Activated naive CD4-positive, alpha-beta T cell treated with anti-CD3 and anti-CD28 coated beads for 36 hours (primary cell): ENCODE measurements at regions of chr7 and their contacts with region 1.

Region 1: GRCh38 chr7:131007394-131008330 is 273.7 kb upstream of the KLF14 start:
- DNase-seq: peak; percentile 80
- H3K4me3 Mint-ChIP-seq: peak overlapping the region; percentile 52
- H3K27ac Mint-ChIP-seq: peak overlapping the region; percentile 91
- H3K4me1 Mint-ChIP-seq: peaks cover 86% of the 10 kb centered on the region
- H3K27me3 Mint-ChIP-seq: no peaks in the 10 kb centered on the region

Region 2: GRCh38 chr7:130875265-130875741 is 132.4 kb before region 1 on chr7:
- CTCF ChIA-PET with region 1: no interaction called
- intact Hi-C with region 1: loop called (anchors 1 kb)
- DNase-seq: peak; percentile 67
- H3K4me3 Mint-ChIP-seq: no peak overlapping the region
- H3K27ac Mint-ChIP-seq: peak overlapping the region; percentile 59
- H3K4me1 Mint-ChIP-seq: peaks cover 39% of the 10 kb centered on the region
- H3K27me3 Mint-ChIP-seq: no peaks in the 10 kb centered on the region

Region 3: DNA sequence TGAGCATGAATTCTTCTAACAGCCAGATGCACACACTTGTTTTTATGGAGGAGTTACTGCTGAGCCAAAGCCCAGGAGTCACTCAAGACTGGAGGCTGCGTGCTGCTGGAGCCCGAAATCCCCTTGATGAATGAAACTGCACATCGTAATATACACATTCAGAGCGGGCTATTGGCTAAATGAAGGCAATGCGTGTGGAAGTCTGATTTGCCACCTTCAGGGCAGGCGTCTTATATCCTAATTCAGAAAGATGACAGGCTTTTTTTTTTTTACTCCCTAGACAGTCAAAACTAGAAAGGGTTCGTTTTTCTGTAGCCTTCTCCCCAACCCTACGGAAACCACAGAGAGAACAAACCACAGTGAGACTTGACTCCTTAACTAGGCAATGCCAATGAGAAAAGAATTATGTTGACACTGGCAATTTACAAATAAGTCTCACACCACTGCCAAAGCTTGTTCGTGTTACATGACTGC is 46.5 kb before region 1 on chr7:
- CTCF ChIA-PET with region 1: interaction called, 5 read pairs
- intact Hi-C with region 1: loop called (anchors 1 kb)
- DNase-seq: peak; percentile 92
- H3K4me3 Mint-ChIP-seq: peak overlapping the region; percentile 87
- H3K27ac Mint-ChIP-seq: peak overlapping the region; percentile 99
- H3K4me1 Mint-ChIP-seq: peaks cover 36% of the 10 kb centered on the region
- H3K27me3 Mint-ChIP-seq: no peaks in the 10 kb centered on the region

Region 4: DNA sequence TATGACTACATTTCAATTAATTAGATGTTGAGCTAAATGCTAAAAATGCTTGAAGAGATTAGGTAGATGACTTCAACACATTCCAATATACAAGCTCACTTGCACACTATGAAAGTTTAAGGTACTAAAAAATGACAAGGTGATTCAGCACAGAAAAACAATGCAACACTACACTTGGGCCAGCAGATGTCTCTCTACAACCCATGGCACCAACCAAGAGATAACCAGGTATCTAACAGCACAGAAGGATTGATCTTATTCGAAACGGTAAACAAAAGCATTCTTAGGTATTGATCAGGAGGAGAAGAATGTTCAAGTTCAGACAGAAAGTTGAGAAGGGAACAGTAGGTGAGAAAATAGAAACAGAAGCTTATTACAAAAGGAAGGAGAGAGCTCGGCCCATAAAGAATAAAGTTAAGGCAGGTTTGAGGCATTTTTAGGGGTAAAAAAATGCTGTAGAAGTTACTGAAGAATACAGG is 25.5 kb before region 1 on chr7:
- CTCF ChIA-PET with region 1: interaction called, 61 read pairs
- intact Hi-C with region 1: loop called (anchors 1 kb)
- DNase-seq: peak; percentile 54
- H3K4me3 Mint-ChIP-seq: no peak overlapping the region
- H3K27ac Mint-ChIP-seq: no peak overlapping the region
- H3K4me1 Mint-ChIP-seq: peaks cover 55% of the 10 kb centered on the region
- H3K27me3 Mint-ChIP-seq: no peaks in the 10 kb centered on the region

Region 5: GRCh38 chr7:131021460-131021859 is 13.8 kb after region 1 on chr7:
- CTCF ChIA-PET with region 1: interaction called, 7 read pairs
- intact Hi-C with region 1: loop called (anchors 1 kb)
- DNase-seq: no peak
- H3K4me3 Mint-ChIP-seq: peak overlapping the region; percentile 33
- H3K27ac Mint-ChIP-seq: peak overlapping the region; percentile 50
- H3K4me1 Mint-ChIP-seq: peaks cover 78% of the 10 kb centered on the region
- H3K27me3 Mint-ChIP-seq: no peaks in the 10 kb centered on the region

Region 6: GRCh38 chr7:131040467-131040932 is 32.8 kb after region 1 on chr7:
- CTCF ChIA-PET with region 1: interaction called, 14 read pairs
- intact Hi-C with region 1: no loop called
- DNase-seq: peak; percentile 75
- H3K4me3 Mint-ChIP-seq: peak overlapping the region; percentile 61
- H3K27ac Mint-ChIP-seq: peak overlapping the region; percentile 65
- H3K4me1 Mint-ChIP-seq: peaks cover 64% of the 10 kb centered on the region
- H3K27me3 Mint-ChIP-seq: no peaks in the 10 kb centered on the region

Region 7: GRCh38 chr7:131327626-131328376 is 320.1 kb after region 1 on chr7 and contains the start of gene MKLN1:
- CTCF ChIA-PET with region 1: no interaction called
- intact Hi-C with region 1: loop called (anchors 5 kb)
- DNase-seq: peak; percentile 90
- H3K4me3 Mint-ChIP-seq: peak within 1 kb of the TSS; percentile 98
- H3K27ac Mint-ChIP-seq: peak within 1 kb of the TSS; percentile 96
- H3K4me1 Mint-ChIP-seq: peaks cover 54% of the 10 kb centered on the region
- H3K27me3 Mint-ChIP-seq: no peaks in the 10 kb centered on the region
- total RNA-seq, gene MKLN1: 29.8 to 34.9 TPM